ENCODE measurements at regions of chr1 and their contacts with region 1.

Region 1: GRCh38 chr1:62131093-62131725 is 63.4 kb upstream of the L1TD1 start:
- DNase-seq: peak; percentile 56 to 66 (median 60)
- ATAC-seq: peak; percentile 98
- H3K4me3 ChIP-seq: no peak overlapping the region
- H3K27ac ChIP-seq: no peak overlapping the region
- H3K4me1 ChIP-seq: no peaks in the 10 kb centered on the region
- H3K27me3 ChIP-seq: peaks cover 4 to 5% of the 10 kb centered on the region in 2 experiments; a peak in 2 of 5 replicates
- CTCF ChIP-seq: peak; percentile 69 to 82 (median 79)
- EP300 ChIP-seq: no peak
- POLR2A ChIP-seq: no peak
- RAD21 ChIP-seq: peak; percentile 40 to 56

Region 2: DNA sequence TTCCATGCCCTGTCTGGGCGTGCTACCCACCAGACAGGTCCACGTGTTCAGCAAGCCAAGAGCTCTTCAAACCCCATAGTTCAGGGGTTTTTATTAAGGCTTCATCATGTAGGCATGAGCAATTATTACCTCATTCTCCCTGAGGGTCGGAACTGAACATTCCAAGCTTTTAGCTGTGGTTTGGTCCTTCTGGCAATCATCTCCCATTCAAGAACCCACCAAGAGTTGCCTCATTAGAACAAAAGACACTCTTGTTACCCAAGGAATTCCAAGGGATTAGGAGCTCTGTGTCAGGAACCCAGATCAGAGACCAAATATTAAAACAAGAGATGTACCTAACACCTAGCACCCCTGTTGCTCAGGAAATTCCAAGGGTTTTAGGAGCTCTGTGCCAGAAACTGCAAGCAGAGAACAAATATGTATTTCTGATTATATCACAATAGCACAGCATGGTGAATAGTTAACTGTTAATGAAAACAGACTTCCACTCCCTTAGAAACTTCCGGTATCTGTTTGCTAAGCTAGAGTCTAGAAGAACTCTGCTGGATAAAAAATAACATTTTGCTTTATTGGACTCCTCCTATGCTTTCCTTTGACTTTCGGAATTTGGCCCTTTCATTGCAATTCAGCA is 137.8 kb before region 1 on chr1:
- CTCF ChIA-PET with region 1: no interaction called
- POLR2A ChIA-PET with region 1: no interaction called
- in situ Hi-C with region 1: no loop called
- intact Hi-C with region 1: no loop called
- DNase-seq: no peak
- ATAC-seq: no peak
- H3K4me3 ChIP-seq: no peak overlapping the region
- H3K27ac ChIP-seq: no peak overlapping the region
- H3K4me1 ChIP-seq: no peaks in the 10 kb centered on the region
- H3K27me3 ChIP-seq: 0 out of 5 replicates have a peak, but pooled peaks cover 0 to 2% of the 10 kb centered on the region in 2 experiments
- CTCF ChIP-seq: no peak
- EP300 ChIP-seq: no peak
- POLR2A ChIP-seq: no peak
- RAD21 ChIP-seq: no peak

Region 3: DNA sequence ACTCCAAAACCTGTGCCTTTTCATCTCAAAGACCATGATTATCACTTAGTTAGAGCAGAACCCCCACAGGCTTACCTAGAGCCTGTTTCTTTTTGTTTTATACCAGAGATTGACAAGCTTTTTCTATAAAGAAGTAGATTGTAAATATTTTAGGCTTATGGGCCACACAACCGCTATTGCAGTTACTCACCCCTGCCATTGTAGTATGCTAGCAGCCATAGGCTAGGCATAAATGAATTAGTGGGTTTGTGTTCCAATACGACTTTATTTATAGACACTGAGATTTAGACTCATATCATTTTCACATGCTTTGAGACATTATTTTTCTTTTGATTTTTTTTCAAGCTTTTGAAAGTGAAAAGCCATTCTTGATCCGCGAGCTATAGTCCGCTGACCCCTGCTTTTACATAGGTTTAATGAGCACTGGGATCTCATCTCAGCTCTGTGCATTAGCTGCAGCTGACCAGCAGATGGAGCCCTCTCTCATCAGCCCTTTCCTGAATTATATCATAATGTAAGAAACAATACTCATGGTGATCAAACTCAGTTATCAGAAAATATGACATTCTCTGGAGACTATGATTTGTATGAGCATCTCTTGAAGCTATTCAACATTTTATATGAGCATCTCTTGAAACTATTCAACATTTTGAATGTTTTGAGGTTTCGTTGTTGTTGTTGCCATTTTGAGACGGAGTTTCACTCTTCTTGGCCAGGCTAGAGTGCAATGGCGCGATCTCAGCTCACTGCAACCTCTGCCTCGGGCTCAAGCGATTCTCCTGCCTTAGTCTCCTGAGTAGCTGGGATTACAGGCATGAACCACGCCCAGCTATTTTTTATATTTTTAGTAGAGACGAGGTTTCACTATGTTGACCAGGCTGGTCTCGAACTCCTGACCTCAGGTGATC is 48.5 kb before region 1 on chr1:
- CTCF ChIA-PET with region 1: interaction called, 3 read pairs
- POLR2A ChIA-PET with region 1: no interaction called
- in situ Hi-C with region 1: no loop called
- intact Hi-C with region 1: loop called (anchors 2 kb)
- DNase-seq: peak; percentile 51 to 65 (median 58)
- ATAC-seq: peak; percentile 93
- H3K4me3 ChIP-seq: peak overlapping the region; percentile 15
- H3K27ac ChIP-seq: no peak overlapping the region
- H3K4me1 ChIP-seq: no peaks in the 10 kb centered on the region; a peak in 1 of 5 replicates
- H3K27me3 ChIP-seq: peaks cover 4 to 16% of the 10 kb centered on the region in 2 experiments; a peak in 3 of 5 replicates
- CTCF ChIP-seq: peak; percentile 69 to 86 (median 84)
- EP300 ChIP-seq: no peak
- POLR2A ChIP-seq: no peak
- RAD21 ChIP-seq: peak; percentile 38 to 66; a peak in 3 of 4 replicates

Region 4: GRCh38 chr1:62452951-62453350 is 321.7 kb after region 1 on chr1:
- CTCF ChIA-PET with region 1: no interaction called
- POLR2A ChIA-PET with region 1: no interaction called
- in situ Hi-C with region 1: no loop called
- intact Hi-C with region 1: no loop called
- DNase-seq: no peak
- ATAC-seq: no peak
- H3K4me3 ChIP-seq: no peak overlapping the region
- H3K27ac ChIP-seq: no peak overlapping the region
- H3K4me1 ChIP-seq: no peaks in the 10 kb centered on the region
- H3K27me3 ChIP-seq: no peaks in the 10 kb centered on the region
- CTCF ChIP-seq: no peak
- EP300 ChIP-seq: no peak
- POLR2A ChIP-seq: no peak
- RAD21 ChIP-seq: no peak

Measured in K562 (cell line).